Activated CD4-positive, alpha-beta T cell treated with anti-CD3 and anti-CD28 coated beads, Interleukin-2, amount 10 ng/mL, durations not matched to agents 24 days and 14 days (primary cell): ENCODE measurements at regions of chr18 and their contacts with region 1.

Region 1: DNA sequence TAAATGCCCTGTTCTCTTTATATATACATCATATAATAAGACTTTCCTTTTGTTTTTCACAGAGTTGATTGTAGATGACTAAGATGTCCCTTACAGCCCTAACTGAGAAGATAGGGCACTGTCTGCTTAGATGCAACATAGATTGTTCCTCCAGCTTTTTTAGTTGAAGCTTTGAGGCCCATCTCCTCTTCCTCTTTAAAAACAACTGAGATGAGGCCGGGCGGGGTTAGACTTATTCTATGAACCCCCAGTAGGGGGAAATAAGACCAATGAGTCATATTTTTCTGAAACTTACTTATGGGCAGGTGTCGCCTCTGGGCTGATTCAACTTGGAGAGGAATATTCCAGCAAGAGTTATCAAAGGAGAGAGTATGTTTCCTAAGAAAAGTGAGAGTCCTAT is 84.6 kb downstream of the FBXO15 start:
- DNase-seq: peak; percentile 83
- H3K4me3 Mint-ChIP-seq: peak overlapping the region; percentile 82
- H3K27ac Mint-ChIP-seq: peak overlapping the region; percentile 84
- H3K4me1 Mint-ChIP-seq: peaks cover 48% of the 10 kb centered on the region
- H3K27me3 Mint-ChIP-seq: no peaks in the 10 kb centered on the region

Region 2: DNA sequence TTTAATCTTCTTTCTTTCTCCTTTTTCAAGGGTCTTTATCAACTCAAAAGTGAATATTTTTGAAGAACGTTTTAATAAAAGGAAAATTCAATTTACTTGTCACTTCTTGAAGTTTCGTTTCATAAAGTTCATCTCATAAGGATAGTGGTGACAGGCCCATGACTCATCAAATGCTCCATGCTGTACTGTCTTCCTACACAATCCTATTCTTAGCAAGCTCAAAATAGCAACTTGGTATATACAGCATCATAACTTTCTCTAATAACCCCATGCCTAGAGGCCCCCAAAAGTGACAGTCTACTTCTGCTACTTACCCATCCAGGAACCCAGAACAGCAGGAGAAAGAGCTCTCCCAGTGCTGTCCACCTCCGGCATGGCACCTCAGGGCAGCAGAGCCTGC is 76.9 kb after region 1 on chr18:
- intact Hi-C with region 1: loop called (anchors 1 kb)
- DNase-seq: no peak
- H3K4me3 Mint-ChIP-seq: peak overlapping the region; percentile 79
- H3K27ac Mint-ChIP-seq: peak overlapping the region; percentile 91
- H3K4me1 Mint-ChIP-seq: peaks cover 37% of the 10 kb centered on the region
- H3K27me3 Mint-ChIP-seq: peaks cover 3% of the 10 kb centered on the region

Region 3: GRCh38 chr18:74147779-74148542 is 84.9 kb after region 1 on chr18 and contains the starts of genes FBXO15 and TIMM21:
- intact Hi-C with region 1: loop called (anchors 2 kb)
- DNase-seq: peak; percentile 99
- H3K4me3 Mint-ChIP-seq: peak within 1 kb of the TSS; percentile 98
- H3K27ac Mint-ChIP-seq: peak within 1 kb of the TSS; percentile 97
- H3K4me1 Mint-ChIP-seq: peaks cover 50% of the 10 kb centered on the region
- H3K27me3 Mint-ChIP-seq: peaks cover 5% of the 10 kb centered on the region
- total RNA-seq, gene FBXO15: 1.2 and 1.3 TPM in 2 replicates
- total RNA-seq, gene TIMM21: 61.8 and 71.8 TPM in 2 replicates